Gastrocnemius medialis (tissue), 4 donors: ENCODE measurements at regions of chr11 and their contacts with region 1.

Region 1: DNA sequence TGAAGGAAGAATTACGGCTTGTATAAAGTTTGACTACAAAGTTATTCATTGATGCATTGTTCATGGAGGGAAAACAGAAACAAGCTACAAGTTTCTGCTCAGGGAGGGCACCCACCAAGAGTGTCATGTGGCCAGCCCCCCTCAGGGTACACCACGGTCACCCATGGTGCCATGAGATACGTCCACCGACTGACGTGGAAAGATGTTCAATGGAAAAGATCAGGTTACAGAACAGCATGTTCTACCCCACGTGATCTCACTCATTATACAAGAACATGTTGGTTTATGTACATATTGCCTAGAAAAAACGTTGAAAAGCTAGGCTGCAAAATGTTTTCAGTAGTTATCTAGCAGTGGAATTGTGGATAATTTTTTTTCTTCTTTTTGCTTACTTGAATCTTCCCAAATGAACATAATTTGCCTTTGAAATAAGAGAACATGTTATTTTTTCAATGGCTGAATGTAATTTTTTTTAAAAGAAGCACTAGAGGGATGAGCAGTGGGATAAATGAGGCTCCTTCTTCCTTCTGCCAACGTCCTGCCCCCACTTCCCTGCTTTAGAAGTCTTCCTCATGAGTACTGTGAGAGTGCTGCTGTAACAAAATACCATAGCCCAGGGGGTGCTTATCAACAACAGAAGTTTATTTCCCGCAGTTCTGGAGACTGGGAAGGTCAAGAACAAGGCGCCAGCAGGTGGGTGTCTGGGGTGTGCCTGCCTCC is 22.5 kb downstream of the RCN1 start:
- DNase-seq: peak in 1 of 2 donors; percentile 17
- ATAC-seq: peak in 1 of 2 donors; percentile 77
- H3K4me3 ChIP-seq: no peak overlapping the region
- H3K27ac ChIP-seq: no peak overlapping the region
- H3K4me1 ChIP-seq: peaks cover 0 to 6% of the 10 kb centered on the region in 2 donors
- H3K27me3 ChIP-seq: no peaks in the 10 kb centered on the region
- CTCF ChIP-seq: no peak
- POLR2A ChIP-seq: no peak

Region 2: GRCh38 chr11:32052218-32052617 is 61.1 kb before region 1 on chr11:
- in situ Hi-C with region 1: no loop called
- intact Hi-C with region 1: no loop called
- DNase-seq: peak in 1 of 2 donors; percentile 15
- ATAC-seq: no peak
- H3K4me3 ChIP-seq: no peak overlapping the region
- H3K27ac ChIP-seq: no peak overlapping the region
- H3K4me1 ChIP-seq: no peaks in the 10 kb centered on the region
- H3K27me3 ChIP-seq: peaks cover 0 to 3% (median 0%) of the 10 kb centered on the region in 3 donors
- CTCF ChIP-seq: peak; percentile 22 to 77 (median 59)
- POLR2A ChIP-seq: no peak

Region 3: GRCh38 chr11:32062540-32062939 is 50.8 kb before region 1 on chr11:
- in situ Hi-C with region 1: loop called in 1 of 4 experiments (anchors 5 kb)
- intact Hi-C with region 1: no loop called
- DNase-seq: no peak
- ATAC-seq: no peak
- H3K4me3 ChIP-seq: no peak overlapping the region
- H3K27ac ChIP-seq: no peak overlapping the region
- H3K4me1 ChIP-seq: no peaks in the 10 kb centered on the region
- H3K27me3 ChIP-seq: no peaks in the 10 kb centered on the region
- CTCF ChIP-seq: no peak
- POLR2A ChIP-seq: no peak